A673 (cell line): ENCODE measurements at regions of chr11 and their contacts with region 1.

Region 1: DNA sequence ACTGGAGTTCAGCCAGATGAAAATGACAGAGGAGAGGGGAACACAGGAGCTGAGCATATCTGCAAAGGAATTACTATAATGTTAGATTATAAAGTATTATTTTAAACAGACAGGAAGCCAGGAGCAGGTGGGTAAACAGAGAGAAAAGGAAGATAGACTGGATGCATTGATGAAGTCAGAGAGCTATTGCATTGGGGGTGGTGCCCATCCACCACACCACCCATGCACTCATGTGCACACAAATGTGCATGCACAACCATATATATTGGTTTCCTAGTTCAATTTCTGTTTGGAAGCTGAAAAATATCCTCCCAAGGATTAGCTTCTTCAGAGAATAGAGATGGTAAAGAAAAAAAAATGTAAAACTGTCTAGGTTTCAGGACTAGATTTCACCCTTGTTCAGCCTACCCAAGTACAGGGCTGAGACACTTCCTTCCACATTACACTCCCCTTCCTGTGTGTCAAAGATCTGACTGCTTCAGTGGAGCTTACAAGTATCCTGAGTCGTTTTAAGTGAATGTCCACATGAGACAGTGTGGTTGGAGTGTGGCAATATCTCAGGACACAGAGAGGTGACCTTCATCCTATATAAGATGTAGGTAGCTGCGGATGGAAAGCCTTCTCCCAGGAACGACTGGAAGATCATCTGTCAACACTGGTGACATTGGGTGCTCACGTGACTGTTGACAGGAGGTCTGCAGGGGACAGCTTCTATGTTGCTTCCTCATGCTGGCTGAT is 12.2 kb upstream of the SMPD1 start:
- DNase-seq: no peak
- H3K4me3 ChIP-seq: no peak overlapping the region
- H3K27ac ChIP-seq: no peak overlapping the region
- H3K4me1 ChIP-seq: peaks cover 29% of the 10 kb centered on the region
- H3K27me3 ChIP-seq: no peaks in the 10 kb centered on the region
- CTCF ChIP-seq: no peak

Region 2: GRCh38 chr11:6362873-6363678 is 15.0 kb before region 1 on chr11:
- CTCF ChIA-PET with region 1: interaction called, 13 read pairs
- POLR2A ChIA-PET with region 1: no interaction called
- intact Hi-C with region 1: no loop called
- DNase-seq: peak; percentile 85
- H3K4me3 ChIP-seq: no peak overlapping the region
- H3K27ac ChIP-seq: no peak overlapping the region
- H3K4me1 ChIP-seq: no peaks in the 10 kb centered on the region
- H3K27me3 ChIP-seq: no peaks in the 10 kb centered on the region
- CTCF ChIP-seq: peak; percentile 86

Region 3: GRCh38 chr11:6505577-6506240 is 127.6 kb after region 1 on chr11:
- CTCF ChIA-PET with region 1: interaction called, 15 read pairs
- POLR2A ChIA-PET with region 1: no interaction called
- intact Hi-C with region 1: loop called (anchors 1 kb)
- DNase-seq: peak; percentile 80
- H3K4me3 ChIP-seq: no peak overlapping the region
- H3K27ac ChIP-seq: peak overlapping the region; percentile 47
- H3K4me1 ChIP-seq: peaks cover 14% of the 10 kb centered on the region
- H3K27me3 ChIP-seq: no peaks in the 10 kb centered on the region
- CTCF ChIP-seq: peak; percentile 84

Region 4: DNA sequence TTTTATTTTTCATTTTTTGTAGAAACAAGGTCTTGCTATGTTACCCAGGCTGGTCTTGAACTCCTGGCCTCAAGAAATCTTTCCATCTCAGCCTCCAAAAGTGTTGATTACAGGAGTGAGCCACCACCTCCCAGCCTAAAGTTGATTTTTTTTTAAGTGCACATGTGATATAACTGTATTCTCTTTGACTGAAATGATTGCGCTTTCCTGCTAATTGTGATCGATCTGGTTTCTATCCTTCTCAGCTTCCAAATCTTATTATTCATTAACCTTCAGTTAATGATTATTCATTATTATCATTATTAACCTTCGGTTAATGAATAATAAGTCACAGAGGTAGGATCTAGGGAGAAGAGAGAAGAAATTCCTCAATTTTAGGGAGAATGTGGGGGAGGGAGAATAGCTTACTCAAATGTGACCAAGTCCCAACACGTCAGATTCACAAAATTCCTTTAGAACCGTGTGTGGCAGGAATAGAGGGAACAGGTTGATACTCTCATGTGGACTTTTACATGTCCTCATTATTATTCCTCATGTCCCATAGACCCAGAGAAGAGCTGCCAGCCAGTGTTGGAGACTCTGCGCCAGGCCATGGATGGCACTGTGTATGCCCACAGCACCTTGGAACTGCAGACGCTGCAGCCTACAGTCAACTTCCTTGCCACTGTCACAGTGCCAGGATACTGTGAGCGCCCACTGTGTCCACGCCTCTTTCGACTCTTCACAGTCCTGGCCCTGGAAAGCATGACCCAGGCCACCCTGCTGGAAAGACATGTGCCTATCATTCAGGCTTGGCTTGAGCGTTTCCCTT is 178.3 kb after region 1 on chr11:
- CTCF ChIA-PET with region 1: no interaction called
- POLR2A ChIA-PET with region 1: no interaction called
- intact Hi-C with region 1: no loop called
- DNase-seq: no peak
- H3K4me3 ChIP-seq: no peak overlapping the region
- H3K27ac ChIP-seq: no peak overlapping the region
- H3K4me1 ChIP-seq: no peaks in the 10 kb centered on the region
- H3K27me3 ChIP-seq: no peaks in the 10 kb centered on the region
- CTCF ChIP-seq: no peak

Region 5: GRCh38 chr11:6693342-6694228 is 315.5 kb after region 1 on chr11:
- CTCF ChIA-PET with region 1: interaction called, 11 read pairs
- POLR2A ChIA-PET with region 1: no interaction called
- intact Hi-C with region 1: no loop called
- DNase-seq: peak; percentile 87
- H3K4me3 ChIP-seq: no peak overlapping the region
- H3K27ac ChIP-seq: peak overlapping the region; percentile 30
- H3K4me1 ChIP-seq: peaks cover 5% of the 10 kb centered on the region
- H3K27me3 ChIP-seq: no peaks in the 10 kb centered on the region
- CTCF ChIP-seq: no peak

Region 6: GRCh38 chr11:6757373-6757967 is 379.4 kb after region 1 on chr11:
- CTCF ChIA-PET with region 1: interaction called, 13 read pairs
- POLR2A ChIA-PET with region 1: no interaction called
- intact Hi-C with region 1: loop called (anchors 1 kb)
- DNase-seq: peak; percentile 69
- H3K4me3 ChIP-seq: no peak overlapping the region
- H3K27ac ChIP-seq: no peak overlapping the region
- H3K4me1 ChIP-seq: no peaks in the 10 kb centered on the region
- H3K27me3 ChIP-seq: no peaks in the 10 kb centered on the region
- CTCF ChIP-seq: peak; percentile 66